AG04449 (cell line): ENCODE measurements at regions of chr15 and their contacts with region 1.

Region 1: DNA sequence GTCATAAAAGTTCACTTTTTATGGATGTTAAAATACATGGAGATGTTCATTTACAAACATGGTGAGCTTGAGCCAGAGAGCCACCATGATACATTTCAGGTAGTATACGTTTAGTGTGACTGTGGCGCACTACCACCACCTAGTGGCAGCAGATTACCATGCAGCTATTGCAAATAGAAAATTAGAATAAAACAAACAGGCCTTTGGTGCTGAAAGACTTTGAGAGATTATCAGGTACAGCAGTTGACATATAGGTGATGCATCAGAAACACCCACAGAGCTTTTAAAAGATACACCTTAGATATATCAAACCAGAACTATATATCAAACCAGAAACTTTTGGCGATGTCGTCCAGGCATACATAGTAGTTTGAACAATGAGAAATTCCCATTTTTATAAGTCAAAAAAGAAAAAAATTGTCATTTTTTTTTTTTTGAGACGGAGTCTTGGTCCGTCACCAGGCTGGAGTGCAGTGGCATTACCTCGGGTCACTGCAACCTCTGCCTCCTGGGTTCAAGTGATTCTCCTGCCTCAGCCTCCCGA is 42.0 kb upstream of the ICE2 start:
- DNase-seq: no peak
- H3K4me3 ChIP-seq: no peak overlapping the region
- CTCF ChIP-seq: peak; percentile 71

Region 2: GRCh38 chr15:59688841-59689625 is 831.9 kb before region 1 on chr15 and contains the start of gene BNIP2:
- CTCF ChIA-PET with region 1: interaction called, 23 read pairs
- POLR2A ChIA-PET with region 1: no interaction called
- DNase-seq: peak; percentile 83
- H3K4me3 ChIP-seq: peak within 1 kb of the TSS; percentile 96
- CTCF ChIP-seq: no peak

Region 3: DNA sequence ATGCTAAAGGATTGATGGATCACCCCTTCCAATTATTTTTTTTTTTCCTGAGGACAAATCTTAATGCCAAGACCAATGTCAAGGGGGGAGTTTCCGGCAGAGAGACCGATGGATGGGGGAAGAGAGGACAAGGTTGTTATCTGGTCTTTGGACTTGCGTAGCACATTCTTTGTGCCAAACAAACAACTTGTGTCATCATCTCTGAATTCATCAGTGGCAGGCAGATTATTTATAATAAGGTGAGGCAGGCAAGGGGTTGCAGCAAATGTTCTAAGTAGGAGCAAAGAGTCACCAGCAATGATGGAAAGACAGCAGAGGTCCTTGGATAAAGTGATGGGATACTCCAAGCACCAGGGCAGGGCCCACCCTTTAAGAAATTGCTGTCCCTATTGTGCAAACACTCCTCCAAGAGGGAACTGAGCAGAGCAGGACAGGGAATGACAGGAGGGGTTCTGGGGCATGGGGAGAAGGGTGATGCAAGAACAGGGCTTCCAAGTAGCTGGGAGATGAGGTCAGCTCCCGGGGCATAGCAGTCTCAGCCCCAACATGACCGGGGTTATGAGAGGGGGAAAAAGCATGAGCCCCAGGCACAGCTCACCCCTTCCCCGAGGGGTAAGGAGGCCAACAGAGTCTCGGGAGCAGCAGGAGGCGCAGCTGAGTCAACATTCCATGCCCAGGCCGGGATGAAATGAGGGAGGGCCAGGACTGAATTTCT is 180.5 kb before region 1 on chr15:
- CTCF ChIA-PET with region 1: interaction called, 11 read pairs
- POLR2A ChIA-PET with region 1: no interaction called
- DNase-seq: no peak
- H3K4me3 ChIP-seq: no peak overlapping the region
- CTCF ChIP-seq: peak; percentile 14

Region 4: GRCh38 chr15:60496853-60497252 is 24.0 kb before region 1 on chr15:
- CTCF ChIA-PET with region 1: interaction called, 10 read pairs
- POLR2A ChIA-PET with region 1: no interaction called
- DNase-seq: no peak
- H3K4me3 ChIP-seq: no peak overlapping the region
- CTCF ChIP-seq: no peak

Region 5: DNA sequence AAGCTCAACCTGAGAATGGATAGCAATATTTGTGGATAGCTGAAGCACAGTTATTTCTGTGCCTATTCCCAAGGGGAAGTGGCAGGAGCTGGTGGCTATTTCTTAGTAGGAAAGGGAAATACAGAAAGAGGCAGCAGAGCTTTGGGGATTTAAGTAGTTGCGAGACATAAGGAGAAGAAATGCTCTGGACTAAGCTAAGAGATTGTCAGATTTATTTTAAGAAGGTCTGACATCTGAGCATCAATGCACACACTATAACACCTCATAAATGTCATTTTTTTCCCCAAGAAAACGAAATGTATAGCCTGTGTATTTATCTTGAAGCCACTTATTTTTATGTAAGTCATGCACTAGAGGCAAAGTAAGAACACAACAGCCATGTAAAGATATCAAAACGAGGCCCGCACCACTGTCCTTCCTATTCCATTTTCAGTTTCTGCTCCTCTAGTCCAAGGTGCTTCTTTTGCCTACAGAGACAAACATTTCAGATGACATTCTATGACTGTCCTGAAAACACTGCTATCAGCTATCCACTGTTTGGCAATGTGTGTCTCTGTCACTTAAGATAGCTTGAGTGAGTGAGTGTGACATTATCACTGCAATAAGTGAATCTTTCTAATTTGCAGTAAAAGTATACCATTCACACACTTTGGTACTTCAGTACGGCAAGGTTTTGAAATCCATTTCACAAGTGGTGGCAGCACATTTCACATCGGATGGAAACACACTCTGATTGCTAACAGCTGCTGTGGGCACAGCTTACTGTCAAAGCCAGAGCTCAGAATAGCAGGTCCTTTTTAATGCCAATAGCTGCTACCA is 20.8 kb after region 1 on chr15:
- CTCF ChIA-PET with region 1: interaction called, 19 read pairs
- POLR2A ChIA-PET with region 1: no interaction called
- DNase-seq: no peak
- H3K4me3 ChIP-seq: no peak overlapping the region
- CTCF ChIP-seq: no peak